CD14-positive monocyte (primary cell): ENCODE measurements at regions of chr22 and their contacts with region 1.

Region 1: GRCh38 chr22:21938071-21938822 is 14.4 kb downstream of the PPM1F start:
- DNase-seq: peak; percentile 26 to 99 (median 98)
- H3K4me3 ChIP-seq: peak overlapping the region; percentile 33 to 72 (median 50)
- H3K4me3 Mint-ChIP-seq: peak overlapping the region; percentile 78 to 90
- H3K27ac ChIP-seq: peak overlapping the region; percentile 96 to 99
- H3K27ac Mint-ChIP-seq: peak overlapping the region; percentile 99 to 100 (median 100)
- H3K4me1 ChIP-seq: peaks cover 84% of the 10 kb centered on the region in 2 donors
- H3K4me1 Mint-ChIP-seq: peaks cover 84% of the 10 kb centered on the region
- H3K27me3 ChIP-seq: no peaks in the 10 kb centered on the region
- H3K27me3 Mint-ChIP-seq: peaks cover 0 to 2% (median 0%) of the 10 kb centered on the region in 3 donors
- CTCF ChIP-seq: peak; percentile 99

Region 2: DNA sequence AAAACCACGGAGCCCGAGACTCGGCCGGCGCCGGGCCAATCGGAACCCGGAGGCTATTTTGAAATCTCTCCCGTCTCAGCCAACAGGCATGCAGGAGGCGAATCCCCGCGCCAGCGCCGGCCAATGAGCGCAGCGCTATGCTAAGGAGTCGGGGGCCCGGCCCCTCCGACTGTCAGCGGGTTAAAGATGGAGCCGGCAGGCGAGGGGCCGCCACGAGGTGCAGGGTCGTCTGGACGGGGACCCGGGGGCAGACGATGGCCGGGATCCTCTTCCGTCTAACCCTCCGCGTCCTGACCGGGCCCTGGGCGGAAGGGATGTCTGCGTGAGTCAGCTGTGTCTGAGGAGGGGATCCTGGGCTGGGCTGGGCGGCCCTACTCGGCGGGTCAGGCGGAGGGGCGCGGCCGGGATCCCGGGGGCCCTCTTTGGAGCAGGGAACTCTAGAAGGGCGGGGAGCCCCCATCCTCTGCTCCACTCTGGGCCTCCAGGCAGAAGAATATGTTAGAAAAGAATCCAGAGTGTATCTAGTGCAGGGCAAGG is 286.2 kb before region 1 on chr22:
- intact Hi-C with region 1: loop called in 1 of 2 experiments (anchors 10 kb)
- DNase-seq: peak; percentile 72 to 86 (median 76)
- H3K4me3 ChIP-seq: peak overlapping the region; percentile 34 to 77 (median 60)
- H3K4me3 Mint-ChIP-seq: peak overlapping the region; percentile 83 to 93
- H3K27ac ChIP-seq: peak overlapping the region in 1 of 2 donors; percentile 69
- H3K27ac Mint-ChIP-seq: peak overlapping the region in 5 of 7 donors; percentile 43 to 80 (median 57)
- H3K4me1 ChIP-seq: peaks cover 23 to 35% of the 10 kb centered on the region in 2 donors
- H3K4me1 Mint-ChIP-seq: peaks cover 27% of the 10 kb centered on the region
- H3K27me3 ChIP-seq: no peaks in the 10 kb centered on the region
- H3K27me3 Mint-ChIP-seq: peaks cover 6 to 8% (median 6%) of the 10 kb centered on the region in 3 donors
- CTCF ChIP-seq: no peak

Region 3: DNA sequence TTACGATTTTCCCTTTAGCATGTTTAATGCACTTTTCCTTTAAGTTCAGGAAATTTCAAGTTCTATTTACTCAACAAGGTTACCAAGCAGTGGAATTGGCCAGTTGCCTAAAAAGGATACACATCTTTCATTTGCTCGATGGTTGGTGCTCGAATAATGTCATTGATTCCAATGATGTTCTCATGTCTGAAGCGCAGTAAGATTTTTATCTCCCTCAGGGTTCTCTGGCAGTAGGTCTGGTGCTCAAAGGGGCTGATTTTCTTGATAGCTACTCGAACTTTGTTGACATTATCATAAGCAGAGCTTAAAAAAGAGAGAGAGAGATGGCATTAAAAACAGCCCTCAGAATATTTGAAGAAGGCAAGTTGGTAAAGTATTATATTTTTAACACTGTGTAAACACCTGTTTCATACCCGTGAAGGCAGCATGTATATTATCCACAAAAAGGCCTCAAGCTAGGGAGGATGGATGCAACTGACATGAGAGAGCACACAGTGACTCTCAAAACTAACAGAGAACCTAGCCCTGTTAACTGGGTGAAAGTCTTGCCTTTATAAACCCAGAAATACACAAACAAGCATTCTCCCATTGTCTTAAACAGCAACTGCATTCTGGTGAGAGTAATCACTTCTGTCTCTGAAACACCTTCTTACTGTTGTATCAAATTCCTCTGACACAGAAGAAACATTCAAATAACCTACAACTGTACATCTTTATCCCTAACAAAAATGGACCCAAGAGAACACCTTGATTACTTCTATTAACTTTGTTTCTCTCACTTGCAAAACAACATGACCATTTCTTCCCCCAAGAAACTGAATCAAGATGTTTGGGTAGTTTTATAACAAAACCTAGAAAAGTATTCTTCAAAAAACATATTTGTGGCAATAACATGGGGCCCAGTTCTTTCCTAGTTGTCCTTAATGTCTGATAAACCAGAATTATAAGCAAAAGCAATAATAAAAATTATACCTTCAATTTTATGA is 130.4 kb before region 1 on chr22:
- intact Hi-C with region 1: loop called (anchors 10 kb)
- DNase-seq: no peak
- H3K4me3 ChIP-seq: no peak overlapping the region
- H3K4me3 Mint-ChIP-seq: no peak overlapping the region
- H3K27ac ChIP-seq: peak overlapping the region in 1 of 2 donors; percentile 58
- H3K27ac Mint-ChIP-seq: peak overlapping the region in 6 of 7 donors; percentile 14 to 86 (median 64)
- H3K4me1 ChIP-seq: peaks cover 11 to 16% of the 10 kb centered on the region in 2 donors
- H3K4me1 Mint-ChIP-seq: peaks cover 17% of the 10 kb centered on the region
- H3K27me3 ChIP-seq: no peaks in the 10 kb centered on the region
- H3K27me3 Mint-ChIP-seq: peaks cover 0 to 2% (median 0%) of the 10 kb centered on the region in 3 donors
- CTCF ChIP-seq: no peak

Region 4: GRCh38 chr22:21816787-21817496 is 121.3 kb before region 1 on chr22:
- intact Hi-C with region 1: loop called in 1 of 2 experiments (anchors 10 kb)
- DNase-seq: peak; percentile 91 to 98 (median 96)
- H3K4me3 ChIP-seq: peak overlapping the region; percentile 24 to 70 (median 33)
- H3K4me3 Mint-ChIP-seq: peak overlapping the region; percentile 75 to 82
- H3K27ac ChIP-seq: peak overlapping the region; percentile 98
- H3K27ac Mint-ChIP-seq: peak overlapping the region; percentile 94 to 100 (median 100)
- H3K4me1 ChIP-seq: peaks cover 55 to 59% of the 10 kb centered on the region in 2 donors
- H3K4me1 Mint-ChIP-seq: peaks cover 62% of the 10 kb centered on the region
- H3K27me3 ChIP-seq: no peaks in the 10 kb centered on the region
- H3K27me3 Mint-ChIP-seq: no peaks in the 10 kb centered on the region
- CTCF ChIP-seq: no peak

Region 5: GRCh38 chr22:21857481-21857914 is 80.7 kb before region 1 on chr22:
- intact Hi-C with region 1: loop called in 1 of 2 experiments (anchors 5 kb)
- DNase-seq: peak; percentile 36 to 65 (median 42)
- H3K4me3 ChIP-seq: peak overlapping the region in 1 of 3 experiments; percentile 49
- H3K4me3 Mint-ChIP-seq: peak overlapping the region; percentile 56 to 68
- H3K27ac ChIP-seq: peak overlapping the region; percentile 56 to 85
- H3K27ac Mint-ChIP-seq: peak overlapping the region; percentile 88 to 98 (median 91)
- H3K4me1 ChIP-seq: peaks cover 70 to 76% of the 10 kb centered on the region in 2 donors
- H3K4me1 Mint-ChIP-seq: peaks cover 84% of the 10 kb centered on the region
- H3K27me3 ChIP-seq: no peaks in the 10 kb centered on the region
- H3K27me3 Mint-ChIP-seq: peaks cover 0 to 2% (median 0%) of the 10 kb centered on the region in 3 donors
- CTCF ChIP-seq: no peak

Region 6: DNA sequence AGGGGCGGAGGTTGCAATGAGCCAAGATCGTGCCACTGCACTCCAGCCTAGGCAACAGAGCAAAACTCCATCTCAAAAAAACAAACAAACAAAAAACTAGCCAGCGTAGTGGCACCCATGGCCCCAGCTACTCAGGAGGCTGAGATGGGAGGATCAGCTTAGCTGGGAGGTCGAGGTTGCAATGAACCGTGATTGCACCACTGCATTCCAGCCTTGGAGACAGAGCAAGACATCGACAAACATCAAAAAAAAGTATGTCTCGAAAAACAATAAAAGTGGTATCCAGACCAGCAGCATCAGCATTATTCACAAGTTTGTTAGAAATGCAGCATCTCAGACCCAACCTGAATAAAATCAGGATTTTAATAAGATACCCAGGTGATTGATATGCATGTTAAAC is 64.6 kb before region 1 on chr22:
- intact Hi-C with region 1: loop called in 1 of 2 experiments (anchors 5 kb)
- DNase-seq: no peak
- H3K4me3 ChIP-seq: no peak overlapping the region
- H3K4me3 Mint-ChIP-seq: no peak overlapping the region
- H3K27ac ChIP-seq: no peak overlapping the region
- H3K27ac Mint-ChIP-seq: peak overlapping the region in 1 of 7 donors; percentile 40
- H3K4me1 ChIP-seq: peaks cover 7 to 14% of the 10 kb centered on the region in 2 donors
- H3K4me1 Mint-ChIP-seq: peaks cover 13% of the 10 kb centered on the region
- H3K27me3 ChIP-seq: no peaks in the 10 kb centered on the region
- H3K27me3 Mint-ChIP-seq: peaks cover 0 to 2% (median 2%) of the 10 kb centered on the region in 3 donors
- CTCF ChIP-seq: no peak

Region 7: GRCh38 chr22:21952586-21953571 is 14.6 kb after region 1 on chr22 and contains the start of gene PPM1F:
- intact Hi-C with region 1: loop called (anchors 2 kb)
- DNase-seq: peak; percentile 68 to 82 (median 81)
- H3K4me3 ChIP-seq: peak within 1 kb of the TSS; percentile 65 to 82 (median 79)
- H3K4me3 Mint-ChIP-seq: peak within 1 kb of the TSS; percentile 90 to 92
- H3K27ac ChIP-seq: peak within 1 kb of the TSS; percentile 30 to 93
- H3K27ac Mint-ChIP-seq: peak within 1 kb of the TSS; percentile 81 to 95 (median 89)
- H3K4me1 ChIP-seq: peaks cover 43 to 53% of the 10 kb centered on the region in 2 donors
- H3K4me1 Mint-ChIP-seq: peaks cover 39% of the 10 kb centered on the region
- H3K27me3 ChIP-seq: no peaks in the 10 kb centered on the region
- H3K27me3 Mint-ChIP-seq: peaks cover 0 to 7% (median 3%) of the 10 kb centered on the region in 3 donors
- CTCF ChIP-seq: peak; percentile 76
- polyA plus RNA-seq, gene PPM1F: 28.8 to 95.0 (median 37.2) TPM